Posterior cingulate gyrus (tissue), 11 donors: ENCODE measurements at regions of chr2 and their contacts with region 1.

Region 1: GRCh38 chr2:232668805-232669444 is 28.2 kb upstream of the GIGYF2 start:
- DNase-seq: peak in 5 of 10 donors; percentile 39 to 91 (median 52)

Region 2: DNA sequence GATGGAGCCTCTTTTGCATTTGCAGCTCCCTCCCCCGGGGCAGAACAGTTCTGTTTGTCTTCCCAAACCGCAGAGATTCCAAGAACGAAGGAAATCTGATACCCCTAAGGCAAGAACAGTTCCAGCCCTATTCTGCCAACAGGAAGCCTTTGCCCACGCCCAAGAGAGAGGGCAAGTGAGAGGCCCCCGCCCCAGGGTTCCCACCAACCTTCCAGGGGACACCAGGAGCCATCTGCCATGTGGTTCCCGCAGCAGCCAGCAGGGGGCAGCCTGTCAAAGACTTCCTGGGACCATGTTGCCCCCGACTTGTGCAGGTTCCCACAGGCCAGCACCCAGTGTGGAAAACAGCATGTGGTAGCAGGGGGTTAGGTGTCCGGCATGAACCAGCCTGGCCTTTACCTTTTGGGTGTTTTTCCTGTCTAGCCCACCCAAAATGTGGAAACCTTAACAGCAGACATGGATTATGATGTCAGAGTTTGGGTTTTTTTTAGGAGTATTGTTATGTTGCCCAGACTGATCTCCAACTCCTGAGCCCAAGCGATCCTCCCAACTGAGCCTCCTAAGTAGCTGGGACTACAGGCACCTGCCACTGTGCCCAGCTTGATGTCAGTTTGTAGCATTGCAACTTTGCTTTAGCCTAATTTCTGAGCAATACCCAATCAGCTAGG is 57.2 kb before region 1 on chr2:
- intact Hi-C with region 1: loop called (anchors 1 kb)
- DNase-seq: peak in 9 of 10 donors; percentile 53 to 95 (median 82)

Region 3: DNA sequence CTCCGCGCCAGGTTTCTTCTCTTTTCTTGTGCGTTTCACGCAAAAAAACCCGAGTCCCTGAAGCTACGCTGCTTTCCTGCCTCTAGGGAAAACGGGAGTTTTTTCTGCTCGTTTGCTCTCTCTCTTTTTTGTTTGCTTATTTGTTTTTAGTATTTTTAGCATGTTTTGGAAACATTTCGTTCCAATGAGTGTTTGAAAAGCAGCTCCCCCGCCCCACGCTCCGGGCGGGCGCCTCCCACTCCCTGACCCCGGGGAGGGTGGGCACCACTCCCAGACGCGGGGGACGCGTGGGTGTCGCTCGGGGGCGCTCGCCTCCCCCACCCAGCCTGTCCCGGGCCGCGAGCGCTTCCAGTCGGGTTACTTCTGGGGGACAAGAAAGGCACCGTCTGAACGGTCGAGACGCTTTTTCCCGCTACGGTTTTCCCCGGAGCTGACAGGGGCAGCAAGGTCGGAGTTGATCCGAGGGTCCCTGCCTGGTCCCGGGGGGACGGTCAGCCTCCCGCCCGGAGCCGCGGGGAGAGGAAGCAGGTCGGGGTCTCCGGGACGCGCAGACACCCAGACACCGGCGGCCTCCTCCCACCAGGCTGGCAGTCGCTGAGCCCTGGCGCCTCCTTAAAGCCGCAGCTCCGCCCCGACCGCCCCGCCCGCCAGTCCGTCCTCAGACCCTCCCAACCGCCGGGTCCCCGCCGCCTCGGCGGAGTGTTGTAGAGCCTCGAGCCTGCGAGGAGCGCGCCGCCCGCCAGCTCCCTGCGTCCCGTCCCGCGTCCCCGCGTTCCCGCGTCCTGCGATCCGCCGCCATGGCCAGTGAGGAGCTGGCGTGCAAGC is 35.8 kb before region 1 on chr2 and contains the start of gene EFHD1:
- intact Hi-C with region 1: loop called (anchors 5 kb)
- DNase-seq: peak; percentile 70 to 97 (median 80)

Region 4: DNA sequence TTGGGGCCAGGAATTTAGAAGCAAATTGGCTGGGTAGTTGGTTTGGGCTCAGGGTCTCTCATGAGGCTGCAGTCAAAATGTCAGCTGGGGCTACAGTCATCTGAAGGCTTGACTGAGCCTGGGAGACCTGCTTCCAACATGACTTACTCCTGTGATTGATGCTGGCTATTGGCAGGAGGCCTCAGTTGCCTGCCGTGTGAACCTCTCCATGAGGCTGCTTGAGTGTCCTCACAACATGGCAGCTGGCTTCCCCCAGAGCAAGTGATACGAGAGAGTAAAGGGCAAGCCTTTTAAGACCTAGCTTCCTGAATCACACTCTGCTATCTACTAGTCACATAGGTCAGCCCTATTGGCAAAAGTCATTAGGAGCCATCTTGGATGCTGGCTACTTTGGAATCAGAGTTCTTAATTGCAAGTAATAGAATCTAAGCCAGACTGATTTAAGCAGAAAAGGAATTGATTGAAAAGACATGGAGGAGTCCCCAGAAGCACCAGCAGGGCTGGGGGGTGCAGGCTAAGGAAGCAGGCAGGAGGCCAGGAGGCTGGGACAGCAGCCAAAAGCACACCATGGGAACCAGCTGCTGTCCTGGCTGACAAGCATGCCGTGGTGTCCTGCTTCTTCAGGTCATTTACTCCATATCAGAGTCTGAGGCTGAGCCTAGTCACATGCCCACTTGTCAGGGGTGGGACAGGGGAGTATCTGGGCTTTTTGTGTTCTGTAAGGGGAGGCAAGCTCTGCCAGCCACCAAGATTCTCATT is 20.4 kb after region 1 on chr2:
- intact Hi-C with region 1: no loop called
- DNase-seq: peak in 8 of 10 donors; percentile 26 to 91 (median 53)